HEK293 (cell line): ENCODE measurements at regions of chr7 and their contacts with region 1.

Region 1: GRCh38 chr7:44573464-44574286 is at the start of gene DDX56:
- H3K4me3 ChIP-seq: peak within 1 kb of the TSS; percentile 59
- H3K27ac ChIP-seq: peak within 1 kb of the TSS; percentile 80
- H3K4me1 ChIP-seq: no peaks in the 10 kb centered on the region
- CTCF ChIP-seq: no peak; the same call in 1 of the 2 replicates

Region 2: DNA sequence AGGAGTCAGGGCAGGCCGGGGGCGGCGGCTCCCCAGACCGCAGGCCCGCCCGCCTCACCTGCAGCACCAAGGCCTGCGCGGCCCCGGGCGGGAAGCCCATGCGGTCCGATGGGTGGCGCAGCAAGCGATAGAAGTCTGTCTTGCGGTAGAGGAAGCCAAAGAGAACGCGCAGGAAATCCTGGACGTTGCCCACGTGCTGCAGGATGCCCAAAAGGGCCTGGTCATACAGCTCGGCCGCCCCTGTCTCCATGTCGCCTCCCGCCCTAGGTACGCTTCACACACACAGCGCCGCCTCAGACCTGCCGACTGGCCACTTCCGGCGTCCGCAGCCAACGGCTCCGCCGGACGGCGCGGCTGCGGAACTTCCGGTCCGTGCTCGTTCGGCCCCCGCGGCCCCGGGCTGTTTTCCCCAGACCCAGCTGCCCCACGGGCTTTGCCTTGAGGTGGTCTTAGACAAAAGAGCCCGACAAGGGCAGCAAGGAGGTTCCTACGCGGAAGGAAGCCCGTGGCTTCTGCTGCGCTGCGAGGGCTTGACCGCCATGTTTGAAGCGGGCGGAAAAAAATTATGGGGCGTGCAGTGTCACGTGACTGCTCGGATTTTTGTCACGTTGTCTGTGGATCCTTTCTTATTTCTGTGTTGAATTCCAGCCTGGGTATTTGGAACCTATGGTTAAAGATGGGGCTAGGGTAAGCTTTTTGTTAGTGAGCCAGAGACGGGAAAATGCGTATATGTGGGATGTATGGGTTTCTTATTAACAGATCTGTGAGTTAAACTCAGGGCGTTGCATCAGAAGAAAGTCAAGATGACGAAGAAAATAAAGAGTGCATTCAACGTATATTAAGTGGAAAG is 83.1 kb before region 1 on chr7 and contains the start of gene NUDCD3:
- CTCF ChIA-PET with region 1: no interaction called
- POLR2A ChIA-PET with region 1: interaction called, 11 read pairs
- H3K4me3 ChIP-seq: peak within 1 kb of the TSS; percentile 94
- H3K27ac ChIP-seq: peak within 1 kb of the TSS; percentile 88
- H3K4me1 ChIP-seq: peaks cover 3% of the 10 kb centered on the region; the same call in 1 of the 2 replicates
- CTCF ChIP-seq: peak; percentile 93

Region 3: DNA sequence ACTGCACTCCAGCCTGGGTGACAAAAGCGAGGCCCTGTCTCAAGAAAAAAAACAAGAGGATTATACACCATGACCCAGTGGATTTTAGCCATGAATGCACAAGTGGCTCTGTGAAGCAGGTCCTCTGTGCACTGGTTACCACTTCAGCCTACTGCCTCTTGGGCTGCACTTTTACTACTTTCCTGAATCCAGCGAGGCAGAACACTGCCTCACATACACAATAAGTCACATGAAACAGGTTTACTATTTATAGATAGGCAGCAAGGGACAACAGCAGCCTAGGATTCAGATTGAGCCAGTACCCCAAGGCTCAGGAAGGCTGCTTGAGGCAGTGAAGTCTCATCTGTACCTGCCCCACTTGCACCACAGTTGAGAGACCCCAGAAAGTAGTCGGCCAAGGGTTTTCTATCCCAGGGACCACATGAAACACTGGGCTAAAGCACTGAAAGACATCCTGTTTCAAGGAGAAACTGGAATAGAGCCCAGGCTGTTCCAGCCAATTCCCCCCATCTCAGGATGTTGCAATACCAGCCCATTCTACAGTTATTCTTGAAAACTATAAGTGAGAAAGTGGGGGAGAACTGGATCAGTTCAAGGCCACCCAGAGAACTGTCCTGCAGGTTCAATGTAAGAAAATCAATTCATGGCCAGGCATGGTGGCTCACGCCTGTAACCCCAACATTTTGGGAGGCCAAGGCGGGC is 22.4 kb after region 1 on chr7:
- CTCF ChIA-PET with region 1: no interaction called
- POLR2A ChIA-PET with region 1: no interaction called
- H3K4me3 ChIP-seq: no peak overlapping the region
- H3K27ac ChIP-seq: no peak overlapping the region
- H3K4me1 ChIP-seq: no peaks in the 10 kb centered on the region
- CTCF ChIP-seq: no peak

Region 4: GRCh38 chr7:44622307-44623151 is 48.9 kb after region 1 on chr7:
- CTCF ChIA-PET with region 1: no interaction called
- POLR2A ChIA-PET with region 1: no interaction called
- H3K4me3 ChIP-seq: no peak overlapping the region
- H3K27ac ChIP-seq: no peak overlapping the region
- H3K4me1 ChIP-seq: peaks cover 11% of the 10 kb centered on the region; the same call in 1 of the 2 replicates
- CTCF ChIP-seq: no peak